Left cardiac atrium (tissue), 4 donors: ENCODE measurements at regions of chr1 and their contacts with region 1.

Region 1: DNA sequence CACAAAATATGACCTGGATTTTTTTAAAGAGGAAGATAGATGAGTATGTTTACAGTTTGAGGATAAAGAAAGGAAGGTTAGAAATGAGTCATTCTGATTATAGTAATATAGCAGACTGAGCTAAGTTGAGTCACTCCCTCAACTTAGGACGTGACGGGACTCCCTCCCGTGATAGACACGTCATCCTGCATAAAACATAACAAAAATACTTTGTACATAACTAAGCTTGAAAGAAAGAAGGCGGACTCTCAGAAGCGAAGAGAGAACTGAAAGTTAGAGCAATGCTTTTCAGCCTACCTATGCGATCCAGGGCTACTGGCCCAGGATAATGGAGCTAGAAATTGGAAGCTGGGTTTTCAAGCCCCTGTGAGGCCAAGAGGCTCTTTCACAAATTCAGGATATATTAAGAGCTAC is 53.0 kb upstream of the DESI2 start:
- DNase-seq: peak; percentile 23
- ATAC-seq: peak in 1 of 2 donors; percentile 93

Region 2: DNA sequence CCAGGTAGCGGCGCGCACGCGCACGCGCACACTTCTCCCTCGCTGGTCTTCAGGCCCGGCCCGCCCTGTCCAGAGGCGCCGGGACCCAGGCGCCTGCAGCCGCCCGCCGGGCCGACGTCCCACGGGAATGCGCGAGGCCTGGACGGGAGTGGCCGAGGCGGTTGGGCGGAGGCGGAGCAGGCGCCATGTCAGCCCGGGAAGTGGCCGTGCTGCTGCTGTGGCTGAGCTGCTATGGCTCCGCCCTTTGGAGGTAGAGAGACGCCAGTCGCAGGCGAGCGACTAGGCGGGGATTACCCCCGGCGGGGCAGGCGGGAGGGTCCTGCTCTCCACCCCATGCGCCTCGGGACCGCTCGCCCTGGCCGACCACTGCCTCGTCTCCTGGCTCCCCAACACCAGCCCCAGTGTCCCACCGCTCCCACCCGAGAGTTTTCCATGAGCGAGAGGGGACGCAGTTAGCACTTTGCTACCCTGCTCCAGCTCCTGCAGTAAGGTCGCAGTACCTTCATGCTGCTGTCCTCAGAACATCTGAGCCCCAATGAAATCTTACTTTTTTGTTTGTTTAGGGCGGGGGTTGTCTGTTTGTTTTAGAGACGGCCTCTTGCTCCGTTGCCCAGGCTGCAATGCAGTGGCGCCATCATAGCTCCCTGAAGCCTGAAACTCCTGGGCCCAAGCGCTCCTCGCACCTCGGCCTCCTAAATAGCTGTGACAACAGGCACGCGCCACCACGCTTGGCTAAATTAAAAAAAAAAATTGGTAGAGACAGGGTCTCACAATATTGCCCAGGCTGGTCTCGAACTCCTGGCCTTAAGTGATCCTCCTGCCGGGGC is 138.5 kb before region 1 on chr1 and contains the start of gene CATSPERE:
- intact Hi-C with region 1: no loop called
- DNase-seq: peak; percentile 92
- ATAC-seq: peak; percentile 99
- total RNA-seq, gene CATSPERE: 0.59 to 0.71 TPM

Region 3: GRCh38 chr1:244796718-244797406 is 196.9 kb after region 1 on chr1:
- intact Hi-C with region 1: loop called (anchors 1 to 5 kb)
- DNase-seq: peak; percentile 50
- ATAC-seq: peak; percentile 53 to 58

Region 4: DNA sequence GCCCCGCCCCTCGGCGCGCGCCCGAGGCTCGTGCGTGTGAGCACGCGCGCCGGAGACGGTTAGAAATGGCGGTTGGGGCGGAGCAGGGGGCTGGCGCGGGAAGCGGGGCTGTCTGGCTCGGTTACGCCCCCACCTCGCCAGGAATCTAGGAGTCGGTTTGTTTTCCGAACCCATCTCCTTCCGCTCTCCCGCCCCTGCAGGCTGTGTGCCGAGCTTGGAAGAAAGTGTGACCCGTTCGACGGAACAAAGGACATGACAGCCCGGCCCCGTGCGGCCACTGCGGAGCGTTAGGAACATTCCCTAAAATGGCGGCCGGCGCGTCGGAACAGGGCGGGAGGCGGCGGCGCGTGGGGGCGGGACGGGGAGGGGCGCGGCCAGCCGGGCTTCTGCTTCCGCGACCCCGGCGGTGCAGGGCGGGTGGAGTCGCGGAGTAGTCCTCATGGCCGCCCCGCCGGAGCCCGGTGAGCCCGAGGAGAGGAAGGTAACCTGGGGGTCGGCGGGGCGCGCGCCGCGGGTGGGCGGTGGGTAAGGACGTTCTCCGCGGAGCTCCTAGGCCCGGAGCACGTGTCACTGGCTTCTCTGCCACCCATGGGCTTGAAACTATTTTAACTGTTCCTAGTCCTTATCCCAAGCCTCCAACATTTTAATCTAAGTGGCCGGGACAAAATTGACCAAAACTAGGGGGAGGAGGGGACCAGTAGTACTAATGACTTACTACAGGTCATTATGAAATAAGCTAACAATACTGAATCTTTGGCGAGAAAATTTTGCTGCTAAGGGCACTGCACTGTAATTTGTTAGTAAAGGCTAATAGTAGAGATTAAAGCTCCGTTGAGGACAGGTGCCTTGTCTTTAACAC is 235.6 kb after region 1 on chr1 and contains the start of gene COX20:
- intact Hi-C with region 1: no loop called
- DNase-seq: peak; percentile 94
- ATAC-seq: peak; percentile 89 to 91
- total RNA-seq, gene COX20: 61.2 to 73.1 TPM

Region 5: GRCh38 chr1:245019910-245020486 is 420.1 kb after region 1 on chr1:
- intact Hi-C with region 1: loop called in 1 of 2 experiments (anchors 10 kb)
- DNase-seq: no peak
- ATAC-seq: no peak